ENCODE measurements at regions of chr4 and their contacts with region 1.

Region 1: GRCh38 chr4:74098450-74098994 is 473 bp downstream of the CXCL2 start:
- DNase-seq: no peak
- ATAC-seq: no peak
- H3K4me3 ChIP-seq: peak overlapping the region; percentile 52
- H3K27ac ChIP-seq: peak overlapping the region; percentile 11; the same call in 1 of the 2 replicates
- H3K4me1 ChIP-seq: peaks cover 4% of the 10 kb centered on the region
- H3K27me3 ChIP-seq: no peaks in the 10 kb centered on the region
- CTCF ChIP-seq: no peak
- POLR2A ChIP-seq: no peak
- RAD21 ChIP-seq: no peak

Region 2: DNA sequence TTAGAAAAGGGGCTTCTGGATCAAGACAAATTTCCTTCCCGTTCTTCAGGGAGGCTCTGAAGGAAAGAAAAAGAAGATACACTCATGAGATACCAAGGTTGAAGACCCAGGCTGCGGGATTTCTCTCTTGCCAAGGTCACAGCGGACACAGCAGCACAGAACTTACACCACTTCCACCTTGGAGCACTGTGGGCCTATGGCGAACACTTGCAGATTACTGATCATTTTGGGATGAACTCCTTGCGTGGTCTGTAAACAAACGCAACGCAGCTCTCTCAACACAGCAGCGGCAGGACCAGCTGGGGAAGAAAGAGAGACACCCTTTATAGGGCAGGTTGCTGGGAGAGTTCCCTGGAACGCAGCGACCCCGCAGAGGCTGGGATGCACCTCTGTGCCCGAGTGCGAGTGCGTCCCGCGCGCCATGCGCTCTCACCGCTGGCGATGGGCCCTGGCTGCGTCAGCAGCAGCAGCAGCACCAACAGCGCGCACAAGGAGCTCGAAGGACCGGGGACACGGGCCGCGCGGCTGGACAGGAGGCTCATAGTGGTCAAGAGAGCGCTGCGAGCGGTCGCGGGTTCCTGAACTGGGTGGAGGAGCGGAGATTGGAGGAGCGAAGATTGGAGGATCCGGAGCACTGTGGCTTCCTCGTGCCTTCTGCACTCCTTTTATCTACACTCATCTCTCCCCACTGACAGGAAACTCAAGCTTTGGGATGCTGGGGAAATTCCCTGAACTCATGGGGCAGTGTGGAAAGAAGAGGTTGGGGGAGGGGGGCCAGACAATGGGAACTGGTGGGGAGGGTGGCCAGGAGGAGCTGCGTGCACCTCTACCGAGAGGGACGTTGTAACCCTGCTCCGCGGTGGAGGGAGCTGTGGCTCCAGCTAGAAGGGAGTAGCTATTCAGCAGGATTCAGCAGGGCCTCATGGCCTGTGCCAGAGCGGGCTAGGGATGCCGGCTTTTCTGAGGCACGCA is 100.2 kb before region 1 on chr4 and contains the start of gene CXCL5:
- CTCF ChIA-PET with region 1: no interaction called
- POLR2A ChIA-PET with region 1: no interaction called
- dilution Hi-C with region 1: no loop called
- in situ Hi-C with region 1: no loop called
- intact Hi-C with region 1: loop called (anchors 5 kb)
- DNase-seq: peak; percentile 39
- ATAC-seq: peak; percentile 87
- H3K4me3 ChIP-seq: peak within 1 kb of the TSS; percentile 14
- H3K27ac ChIP-seq: no peak within 1 kb of the TSS
- H3K4me1 ChIP-seq: peaks cover 2% of the 10 kb centered on the region; the same call in 1 of the 2 replicates
- H3K27me3 ChIP-seq: peaks cover 12% of the 10 kb centered on the region
- CTCF ChIP-seq: no peak
- POLR2A ChIP-seq: no peak
- RAD21 ChIP-seq: 0 out of 2 replicates have a peak, but pooled peaks have one; percentile 11
- total RNA-seq, gene CXCL5: not detected in 2 replicates

Region 3: GRCh38 chr4:74056114-74056857 is 42.2 kb before region 1 on chr4:
- CTCF ChIA-PET with region 1: no interaction called
- POLR2A ChIA-PET with region 1: no interaction called
- dilution Hi-C with region 1: no loop called
- in situ Hi-C with region 1: no loop called
- intact Hi-C with region 1: no loop called
- DNase-seq: peak; percentile 52
- ATAC-seq: peak; percentile 56
- H3K4me3 ChIP-seq: no peak overlapping the region
- H3K27ac ChIP-seq: no peak overlapping the region
- H3K4me1 ChIP-seq: peaks cover 3% of the 10 kb centered on the region
- H3K27me3 ChIP-seq: no peaks in the 10 kb centered on the region
- CTCF ChIP-seq: peak; percentile 21; the same call in 1 of the 2 replicates
- POLR2A ChIP-seq: no peak
- RAD21 ChIP-seq: no peak

Region 4: DNA sequence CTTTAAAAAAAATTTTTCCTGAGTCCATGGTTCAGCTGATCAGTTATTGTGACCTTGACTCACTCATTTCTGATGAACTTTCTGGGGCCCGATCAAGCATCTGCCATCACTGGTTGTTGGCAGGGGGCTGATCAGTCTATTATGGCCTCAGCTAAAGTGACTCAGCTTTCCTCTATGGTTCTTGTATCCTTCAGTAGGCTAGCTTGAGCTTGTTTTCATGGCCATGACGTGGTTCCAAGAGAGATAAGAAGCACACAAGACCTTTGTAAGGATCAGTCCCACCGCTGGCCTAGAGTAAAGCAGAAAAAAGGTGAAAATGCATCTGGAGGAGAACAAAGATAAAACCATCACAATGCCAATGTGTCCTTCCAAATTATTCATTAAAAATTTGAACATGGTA is 180.0 kb after region 1 on chr4:
- CTCF ChIA-PET with region 1: no interaction called
- POLR2A ChIA-PET with region 1: no interaction called
- dilution Hi-C with region 1: no loop called
- in situ Hi-C with region 1: no loop called
- intact Hi-C with region 1: no loop called
- DNase-seq: no peak
- ATAC-seq: no peak
- H3K4me3 ChIP-seq: no peak overlapping the region
- H3K27ac ChIP-seq: no peak overlapping the region
- H3K4me1 ChIP-seq: peaks cover 2% of the 10 kb centered on the region; the same call in 1 of the 2 replicates
- H3K27me3 ChIP-seq: no peaks in the 10 kb centered on the region
- CTCF ChIP-seq: no peak
- POLR2A ChIP-seq: no peak
- RAD21 ChIP-seq: no peak